CD4-positive, alpha-beta T cell (primary cell): ENCODE measurements at regions of chr6 and their contacts with region 1.

Region 1: GRCh38 chr6:107820338-107821261 is 3.5 kb downstream of the SCML4 start:
- DNase-seq: peak; percentile 39 to 69 (median 49)
- ATAC-seq: no peak
- H3K4me3 ChIP-seq: peak overlapping the region; percentile 74
- H3K4me3 Mint-ChIP-seq: peak overlapping the region; percentile 96
- H3K27ac ChIP-seq: peak overlapping the region; percentile 87 to 88
- H3K27ac Mint-ChIP-seq: peak overlapping the region; percentile 96
- H3K4me1 ChIP-seq: peaks cover 64% of the 10 kb centered on the region
- H3K4me1 Mint-ChIP-seq: peaks cover 87% of the 10 kb centered on the region
- H3K27me3 ChIP-seq: no peaks in the 10 kb centered on the region
- H3K27me3 Mint-ChIP-seq: no peaks in the 10 kb centered on the region
- CTCF ChIP-seq: no peak

Region 2: DNA sequence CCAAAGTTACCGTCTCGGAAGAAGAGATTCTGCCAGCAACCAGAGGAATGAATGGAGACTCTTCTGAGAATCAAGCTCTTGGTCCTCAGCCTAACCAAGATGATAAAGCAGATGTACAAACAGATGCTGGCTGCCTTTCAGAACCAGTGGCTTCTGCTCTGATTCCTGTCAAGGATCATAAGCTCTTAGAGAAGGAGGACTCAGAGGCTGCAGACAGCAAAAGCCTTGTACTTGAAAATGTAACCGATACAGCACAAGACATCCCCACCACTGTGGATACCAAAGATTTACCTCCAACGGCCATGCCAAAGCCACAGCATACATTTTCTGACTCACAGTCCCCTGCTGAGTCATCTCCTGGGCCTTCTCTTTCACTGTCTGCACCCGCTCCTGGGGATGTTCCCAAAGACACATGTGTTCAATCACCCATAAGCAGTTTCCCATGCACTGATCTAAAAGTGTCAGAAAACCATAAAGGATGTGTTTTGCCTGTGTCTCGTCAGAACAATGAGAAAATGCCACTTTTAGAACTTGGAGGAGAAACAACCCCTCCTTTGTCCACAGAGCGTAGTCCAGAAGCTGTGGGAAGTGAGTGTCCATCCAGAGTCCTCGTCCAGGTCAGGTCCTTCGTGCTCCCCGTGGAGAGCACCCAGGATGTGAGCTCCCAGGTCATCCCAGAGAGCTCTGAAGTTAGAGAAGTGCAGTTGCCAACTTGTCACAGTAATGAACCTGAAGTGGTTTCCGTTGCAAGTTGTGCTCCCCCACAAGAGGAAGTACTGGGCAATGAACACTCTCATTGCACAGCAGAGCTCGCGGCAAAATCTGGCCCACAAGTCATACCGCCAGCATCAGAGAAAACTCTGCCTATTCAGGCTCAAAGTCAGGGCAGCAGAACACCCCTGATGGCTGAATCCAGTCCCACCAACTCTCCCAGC is 1300.9 kb before region 1 on chr6:
- CTCF ChIA-PET with region 1: no interaction called
- POLR2A ChIA-PET with region 1: no interaction called
- intact Hi-C with region 1: loop called in 1 of 2 experiments (anchors 5 kb)
- DNase-seq: peak; percentile 52 to 90 (median 68)
- ATAC-seq: peak; percentile 47
- H3K4me3 ChIP-seq: peak overlapping the region; percentile 60
- H3K4me3 Mint-ChIP-seq: peak overlapping the region; percentile 94
- H3K27ac ChIP-seq: peak overlapping the region; percentile 87 to 92
- H3K27ac Mint-ChIP-seq: peak overlapping the region; percentile 96
- H3K4me1 ChIP-seq: peaks cover 54% of the 10 kb centered on the region
- H3K4me1 Mint-ChIP-seq: peaks cover 72% of the 10 kb centered on the region
- H3K27me3 ChIP-seq: no peaks in the 10 kb centered on the region
- H3K27me3 Mint-ChIP-seq: no peaks in the 10 kb centered on the region
- CTCF ChIP-seq: no peak

Region 3: GRCh38 chr6:107443608-107444267 is 376.9 kb before region 1 on chr6:
- CTCF ChIA-PET with region 1: no interaction called
- POLR2A ChIA-PET with region 1: no interaction called
- intact Hi-C with region 1: no loop called
- DNase-seq: no peak
- ATAC-seq: no peak
- H3K4me3 ChIP-seq: no peak overlapping the region
- H3K4me3 Mint-ChIP-seq: no peak overlapping the region
- H3K27ac ChIP-seq: no peak overlapping the region
- H3K27ac Mint-ChIP-seq: no peak overlapping the region
- H3K4me1 ChIP-seq: no peaks in the 10 kb centered on the region
- H3K4me1 Mint-ChIP-seq: peaks cover 36% of the 10 kb centered on the region
- H3K27me3 ChIP-seq: no peaks in the 10 kb centered on the region
- H3K27me3 Mint-ChIP-seq: no peaks in the 10 kb centered on the region
- CTCF ChIP-seq: no peak

Region 4: GRCh38 chr6:107731422-107732319 is 88.9 kb before region 1 on chr6:
- CTCF ChIA-PET with region 1: interaction called, 19 read pairs
- POLR2A ChIA-PET with region 1: interaction called, 259 read pairs
- intact Hi-C with region 1: loop called (anchors 1 to 2 kb)
- DNase-seq: peak in 12 of 14 experiments; percentile 25 to 68 (median 50)
- ATAC-seq: peak; percentile 58
- H3K4me3 ChIP-seq: peak overlapping the region; percentile 84
- H3K4me3 Mint-ChIP-seq: peak overlapping the region; percentile 94
- H3K27ac ChIP-seq: peak overlapping the region; percentile 59 to 79
- H3K27ac Mint-ChIP-seq: peak overlapping the region; percentile 93
- H3K4me1 ChIP-seq: peaks cover 81% of the 10 kb centered on the region
- H3K4me1 Mint-ChIP-seq: peaks cover 94% of the 10 kb centered on the region
- H3K27me3 ChIP-seq: no peaks in the 10 kb centered on the region
- H3K27me3 Mint-ChIP-seq: no peaks in the 10 kb centered on the region
- CTCF ChIP-seq: no peak

Region 5: DNA sequence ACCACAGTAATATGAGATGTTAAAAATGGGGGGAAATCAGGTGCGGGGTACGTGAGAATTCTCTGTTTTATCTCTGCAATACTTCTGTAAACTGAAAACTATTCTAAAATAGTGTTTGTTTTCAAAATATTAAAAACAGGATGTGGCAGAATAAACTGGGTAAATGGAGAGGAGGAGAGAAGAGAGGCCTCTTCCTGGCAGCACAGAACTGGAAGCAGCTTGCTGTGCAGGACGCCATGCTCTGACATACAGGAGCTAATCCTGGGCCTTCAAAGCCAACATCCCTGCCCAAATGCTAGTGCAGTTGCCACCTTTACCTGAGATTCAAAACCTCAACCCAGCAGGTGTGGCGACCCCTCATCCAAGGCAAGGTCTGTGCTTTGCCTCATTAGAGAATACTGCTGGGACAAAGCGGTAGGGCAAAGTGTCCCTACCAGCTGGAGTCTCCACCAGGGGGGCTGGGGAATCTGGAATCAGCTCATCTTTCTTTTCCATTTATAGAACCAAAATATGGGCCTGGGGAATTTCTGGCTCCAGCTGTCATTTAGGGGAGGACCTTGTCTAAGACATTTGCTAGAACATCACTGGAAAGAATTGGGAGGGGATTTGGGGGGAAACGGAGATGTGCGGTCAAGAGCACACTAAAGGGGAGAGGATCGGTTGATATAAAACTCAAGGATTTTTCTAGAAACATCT is 63.8 kb before region 1 on chr6:
- CTCF ChIA-PET with region 1: no interaction called
- POLR2A ChIA-PET with region 1: interaction called, 33 read pairs
- intact Hi-C with region 1: no loop called
- DNase-seq: peak in 2 of 14 experiments; percentile 26 to 54
- ATAC-seq: peak; percentile 43
- H3K4me3 ChIP-seq: no peak overlapping the region
- H3K4me3 Mint-ChIP-seq: peak overlapping the region; percentile 31
- H3K27ac ChIP-seq: peak overlapping the region in 1 of 2 donors; percentile 55
- H3K27ac Mint-ChIP-seq: peak overlapping the region; percentile 69
- H3K4me1 ChIP-seq: peaks cover 30% of the 10 kb centered on the region
- H3K4me1 Mint-ChIP-seq: peaks cover 79% of the 10 kb centered on the region
- H3K27me3 ChIP-seq: no peaks in the 10 kb centered on the region
- H3K27me3 Mint-ChIP-seq: no peaks in the 10 kb centered on the region
- CTCF ChIP-seq: no peak

Region 6: GRCh38 chr6:107793191-107793590 is 27.4 kb before region 1 on chr6:
- CTCF ChIA-PET with region 1: interaction called, 3 read pairs
- POLR2A ChIA-PET with region 1: interaction called, 220 read pairs
- intact Hi-C with region 1: loop called in 1 of 2 experiments (anchors 5 kb)
- DNase-seq: peak in 2 of 14 experiments; percentile 23 to 24
- ATAC-seq: peak; percentile 73
- H3K4me3 ChIP-seq: no peak overlapping the region
- H3K4me3 Mint-ChIP-seq: peak overlapping the region; percentile 13
- H3K27ac ChIP-seq: peak overlapping the region; percentile 43 to 61
- H3K27ac Mint-ChIP-seq: peak overlapping the region; percentile 93
- H3K4me1 ChIP-seq: peaks cover 42% of the 10 kb centered on the region
- H3K4me1 Mint-ChIP-seq: peaks cover 90% of the 10 kb centered on the region
- H3K27me3 ChIP-seq: no peaks in the 10 kb centered on the region
- H3K27me3 Mint-ChIP-seq: no peaks in the 10 kb centered on the region
- CTCF ChIP-seq: no peak

Region 7: DNA sequence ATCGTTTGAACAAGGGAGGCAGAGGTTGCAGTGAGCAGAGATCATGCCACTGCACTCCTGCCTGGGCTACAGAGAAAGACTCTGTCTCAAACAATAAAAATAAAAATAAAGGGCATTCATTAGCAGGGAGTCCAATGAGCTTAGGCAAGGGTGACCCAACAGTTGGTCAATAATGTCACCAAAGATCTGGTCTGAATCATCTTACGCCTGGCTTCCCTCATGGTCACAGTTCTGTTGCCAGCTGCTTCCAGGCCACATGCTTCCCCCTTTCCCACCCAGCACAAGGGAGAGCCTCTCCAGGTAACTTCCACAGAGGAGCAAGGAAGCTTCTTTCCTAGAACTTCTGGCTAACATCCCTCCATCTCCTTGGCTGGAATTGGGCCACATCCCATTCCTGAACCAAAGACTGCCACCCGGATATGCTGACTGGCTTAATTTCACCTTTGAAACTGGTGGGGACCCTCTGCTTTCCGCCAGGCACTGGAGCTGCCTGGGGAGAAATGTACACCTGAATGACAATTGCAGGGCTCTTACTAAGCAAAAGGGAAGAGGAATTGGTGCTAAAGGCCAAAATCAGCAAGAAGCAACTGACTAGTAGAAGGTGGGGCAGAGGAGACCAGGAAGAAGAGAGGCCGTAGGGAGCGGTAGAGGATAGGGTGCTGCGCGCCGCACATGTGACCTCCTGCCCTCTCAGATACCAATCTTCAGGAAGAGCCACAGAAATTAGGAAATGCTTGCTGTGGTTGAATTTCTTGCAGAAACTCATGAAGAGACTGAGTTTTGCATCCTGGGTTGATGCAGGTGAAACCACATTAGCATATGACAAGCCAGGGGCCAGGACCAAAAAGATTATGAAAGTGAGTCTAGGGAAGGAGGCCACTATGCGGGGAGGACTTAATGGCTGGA is 11.8 kb after region 1 on chr6:
- CTCF ChIA-PET with region 1: interaction called, 3 read pairs
- POLR2A ChIA-PET with region 1: interaction called, 59 read pairs
- intact Hi-C with region 1: no loop called
- DNase-seq: peak in 3 of 14 experiments; percentile 19 to 38 (median 34)
- ATAC-seq: peak; percentile 60
- H3K4me3 ChIP-seq: no peak overlapping the region
- H3K4me3 Mint-ChIP-seq: peak overlapping the region; percentile 4
- H3K27ac ChIP-seq: no peak overlapping the region
- H3K27ac Mint-ChIP-seq: peak overlapping the region; percentile 60
- H3K4me1 ChIP-seq: peaks cover 33% of the 10 kb centered on the region
- H3K4me1 Mint-ChIP-seq: peaks cover 35% of the 10 kb centered on the region
- H3K27me3 ChIP-seq: no peaks in the 10 kb centered on the region
- H3K27me3 Mint-ChIP-seq: no peaks in the 10 kb centered on the region
- CTCF ChIP-seq: no peak

Region 8: GRCh38 chr6:107957909-107958688 is 137.5 kb after region 1 on chr6 and contains the start of gene SEC63:
- CTCF ChIA-PET with region 1: no interaction called
- POLR2A ChIA-PET with region 1: interaction called, 6 read pairs
- intact Hi-C with region 1: loop called in 1 of 2 experiments (anchors 5 kb)
- DNase-seq: peak; percentile 94 to 98 (median 97)
- ATAC-seq: peak; percentile 97
- H3K4me3 ChIP-seq: peak within 1 kb of the TSS; percentile 81
- H3K4me3 Mint-ChIP-seq: peak within 1 kb of the TSS; percentile 99
- H3K27ac ChIP-seq: peak within 1 kb of the TSS; percentile 46 to 61
- H3K27ac Mint-ChIP-seq: peak within 1 kb of the TSS; percentile 82
- H3K4me1 ChIP-seq: peaks cover 16% of the 10 kb centered on the region
- H3K4me1 Mint-ChIP-seq: peaks cover 32% of the 10 kb centered on the region
- H3K27me3 ChIP-seq: no peaks in the 10 kb centered on the region
- H3K27me3 Mint-ChIP-seq: no peaks in the 10 kb centered on the region
- CTCF ChIP-seq: no peak
- total RNA-seq, gene SEC63: 80.3 to 86.7 TPM

Region 9: DNA sequence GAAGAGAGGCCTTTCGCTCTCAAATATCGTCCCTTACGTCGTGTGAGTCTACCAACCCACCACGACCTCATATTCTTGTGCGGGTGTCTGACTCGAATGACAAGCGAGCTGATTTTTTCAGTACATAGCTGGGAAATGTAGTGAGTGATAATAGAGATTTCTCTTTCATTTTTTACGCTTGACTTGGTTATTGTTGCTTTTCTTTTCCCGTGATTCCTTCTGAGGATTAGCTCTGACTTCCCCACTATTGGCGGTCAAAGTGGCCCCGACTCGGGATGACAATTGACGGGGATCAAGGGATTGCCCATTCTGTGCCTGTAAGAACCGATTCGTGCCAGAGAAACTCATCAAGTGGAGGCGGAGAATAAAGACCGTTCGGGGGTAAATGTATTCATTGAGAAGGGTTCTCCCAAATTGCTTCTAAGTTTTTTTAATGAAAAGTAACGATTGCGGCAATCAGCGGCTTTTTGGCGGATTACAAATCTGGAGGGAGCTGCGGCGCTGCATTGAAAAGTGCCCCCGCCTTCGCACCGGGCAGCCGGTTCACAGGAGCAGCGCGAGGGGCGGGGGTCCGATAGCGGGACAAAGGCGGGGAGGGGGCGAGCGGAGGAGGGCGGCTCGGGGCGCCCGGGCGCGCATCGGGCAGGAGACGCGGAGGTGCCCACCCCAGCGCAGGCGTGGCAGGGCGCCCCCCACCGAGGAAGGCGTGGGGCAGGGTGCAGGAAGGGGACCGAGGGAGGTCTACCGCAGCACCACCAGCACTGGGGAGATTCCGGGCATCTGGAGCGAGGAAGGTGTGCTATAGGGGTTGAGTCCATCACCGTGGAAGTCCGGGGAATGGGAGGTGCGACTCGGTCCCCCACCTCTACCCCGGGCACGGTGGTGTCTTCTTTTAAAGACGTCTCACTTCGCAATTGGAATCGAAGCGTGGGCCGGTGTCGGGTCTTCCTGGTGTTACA is 298.5 kb after region 1 on chr6:
- CTCF ChIA-PET with region 1: no interaction called
- POLR2A ChIA-PET with region 1: no interaction called
- intact Hi-C with region 1: no loop called
- DNase-seq: peak in 2 of 14 experiments; percentile 13 to 17
- ATAC-seq: no peak
- H3K4me3 ChIP-seq: peak overlapping the region; percentile 37
- H3K4me3 Mint-ChIP-seq: peak overlapping the region; percentile 89
- H3K27ac ChIP-seq: no peak overlapping the region
- H3K27ac Mint-ChIP-seq: no peak overlapping the region
- H3K4me1 ChIP-seq: peaks cover 56% of the 10 kb centered on the region
- H3K4me1 Mint-ChIP-seq: peaks cover 51% of the 10 kb centered on the region
- H3K27me3 ChIP-seq: peaks cover 72 to 95% of the 10 kb centered on the region in 2 experiments
- H3K27me3 Mint-ChIP-seq: peaks cover 91% of the 10 kb centered on the region
- CTCF ChIP-seq: no peak